ENCODE measurements at regions of chr6 and their contacts with region 1.

Region 1: GRCh38 chr6:156686995-156687788 is 90.0 kb upstream of the ARID1B start:
- DNase-seq: peak; percentile 79 to 97 (median 92)
- H3K4me3 ChIP-seq: peak overlapping the region; percentile 56 to 86 (median 77)
- H3K27ac ChIP-seq: peak overlapping the region; percentile 92 to 100 (median 99)
- H3K27me3 ChIP-seq: no peaks in the 10 kb centered on the region
- CTCF ChIP-seq: peak in 4 of 56 donors; percentile 1 to 9 (median 6)

Region 2: DNA sequence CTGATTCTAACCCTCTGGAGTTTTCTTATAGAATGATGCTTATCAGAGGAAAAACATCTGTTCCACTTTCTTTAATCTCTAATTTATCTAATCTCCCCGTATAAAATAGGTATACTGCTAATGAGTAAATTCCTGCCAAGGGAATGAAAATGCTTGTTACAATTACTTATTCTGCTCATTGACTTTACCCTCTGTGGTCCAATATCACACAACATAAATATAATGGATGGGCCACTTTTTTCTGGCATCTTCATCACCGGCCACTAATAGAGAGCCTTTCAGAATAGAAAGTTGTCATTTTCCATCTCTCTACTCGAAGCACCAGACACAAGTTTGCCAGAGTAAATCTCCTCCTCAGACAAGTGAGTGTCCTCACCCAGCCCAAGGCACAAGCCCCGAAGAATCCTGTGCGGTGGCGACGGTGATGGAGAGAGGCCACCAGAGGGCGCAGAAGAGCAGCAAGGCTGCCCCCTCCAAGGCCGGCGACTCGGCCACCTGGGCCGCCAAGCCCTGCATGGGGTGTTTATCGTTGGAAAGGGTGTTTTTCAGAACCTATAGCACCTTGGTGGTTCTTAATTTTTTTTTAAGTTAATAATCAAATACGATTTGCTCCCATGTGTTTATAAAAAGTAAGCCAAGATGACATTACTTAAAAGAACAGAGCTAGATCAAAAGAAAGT is 122.9 kb before region 1 on chr6:
- intact Hi-C with region 1: loop called (anchors 2 to 10 kb)
- DNase-seq: peak; percentile 66 to 88 (median 80)
- H3K4me3 ChIP-seq: peak overlapping the region in 11 of 59 donors; percentile 2 to 31 (median 9)
- H3K27ac ChIP-seq: peak overlapping the region in 2 of 59 donors; percentile 7 to 33
- H3K27me3 ChIP-seq: peaks cover 0 to 4% (median 0%) of the 10 kb centered on the region in 45 donors
- CTCF ChIP-seq: peak; percentile 77 to 98 (median 93)

Region 3: DNA sequence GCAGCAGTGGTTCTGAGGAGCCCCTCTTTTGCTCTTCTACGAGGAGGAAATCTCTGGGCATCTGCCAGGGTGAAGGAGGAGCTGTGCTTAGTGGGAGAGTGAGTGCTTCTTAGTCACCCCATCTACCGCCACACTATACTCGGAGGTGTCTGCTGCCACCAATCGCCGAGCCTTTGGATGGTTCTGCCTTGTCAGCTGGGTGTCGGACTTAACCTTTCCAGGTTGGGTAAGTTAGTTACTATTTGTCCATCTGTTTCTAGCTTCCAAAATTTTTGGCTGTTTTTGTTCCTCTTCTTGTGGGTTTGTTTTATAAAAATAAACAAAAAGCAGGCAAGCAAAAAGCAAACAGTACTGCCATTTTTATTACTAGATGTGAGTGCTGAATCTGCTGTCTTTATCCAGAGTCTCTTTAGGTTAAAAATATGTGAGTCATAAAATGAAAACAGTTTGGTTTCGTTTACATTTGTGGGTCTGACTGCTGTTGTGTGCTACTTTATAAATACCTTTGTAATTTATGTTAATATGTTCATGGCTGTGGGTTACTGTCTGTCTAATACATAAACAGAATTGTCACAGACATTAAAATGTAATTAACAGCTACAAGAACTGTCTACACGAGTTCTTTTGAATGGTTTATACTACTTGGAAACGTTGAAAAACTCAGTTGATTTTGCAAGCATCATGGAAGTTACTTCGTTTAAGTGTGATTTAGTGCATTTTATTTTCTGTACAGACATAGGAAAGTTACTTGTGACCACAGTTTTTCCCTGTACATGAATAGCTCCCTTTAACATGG is 179.2 kb after region 1 on chr6:
- intact Hi-C with region 1: loop called in 1 of 2 experiments (anchors 5 kb)
- DNase-seq: peak in 7 of 10 donors; percentile 29 to 63 (median 54)
- H3K4me3 ChIP-seq: no peak overlapping the region
- H3K27ac ChIP-seq: peak overlapping the region in 14 of 59 donors; percentile 0 to 41 (median 16)
- H3K27me3 ChIP-seq: no peaks in the 10 kb centered on the region
- CTCF ChIP-seq: peak in 26 of 56 donors; percentile 13 to 58 (median 32)

Region 4: GRCh38 chr6:157184202-157185020 is 497.2 kb after region 1 on chr6:
- intact Hi-C with region 1: loop called (anchors 5 to 10 kb)
- DNase-seq: peak; percentile 67 to 82 (median 76)
- H3K4me3 ChIP-seq: peak overlapping the region in 53 of 59 donors; percentile 2 to 62 (median 40)
- H3K27ac ChIP-seq: peak overlapping the region in 31 of 59 donors; percentile 1 to 72 (median 42)
- H3K27me3 ChIP-seq: no peaks in the 10 kb centered on the region
- CTCF ChIP-seq: peak; percentile 57 to 98 (median 91)